Colonic mucosa (tissue), 4 donors: ENCODE measurements at regions of chr19 and their contacts with region 1.

Region 1: GRCh38 chr19:12564016-12564664 is 12.9 kb upstream of the ZNF564 start:
- DNase-seq: peak; percentile 95
- H3K4me3 ChIP-seq: no peak overlapping the region
- H3K27ac ChIP-seq: no peak overlapping the region
- H3K4me1 ChIP-seq: no peaks in the 10 kb centered on the region
- H3K27me3 ChIP-seq: no peaks in the 10 kb centered on the region
- CTCF ChIP-seq: peak; percentile 97

Region 2: GRCh38 chr19:12202250-12202649 is 361.9 kb before region 1 on chr19:
- intact Hi-C with region 1: loop called (anchors 5 kb)
- DNase-seq: peak; percentile 61
- H3K4me3 ChIP-seq: no peak overlapping the region
- H3K27ac ChIP-seq: no peak overlapping the region
- H3K4me1 ChIP-seq: no peaks in the 10 kb centered on the region
- H3K27me3 ChIP-seq: no peaks in the 10 kb centered on the region
- CTCF ChIP-seq: peak; percentile 32

Region 3: GRCh38 chr19:12484371-12485051 is 79.6 kb before region 1 on chr19 and contains the start of gene ZNF709:
- intact Hi-C with region 1: no loop called
- DNase-seq: peak; percentile 96
- H3K4me3 ChIP-seq: peak within 1 kb of the TSS; percentile 93
- H3K27ac ChIP-seq: peak within 1 kb of the TSS; percentile 56
- H3K4me1 ChIP-seq: no peaks in the 10 kb centered on the region
- H3K27me3 ChIP-seq: no peaks in the 10 kb centered on the region
- CTCF ChIP-seq: no peak
- total RNA-seq, gene ZNF709: 1.3 to 2.0 TPM

Region 4: GRCh38 chr19:12544401-12544876 is 19.7 kb before region 1 on chr19:
- intact Hi-C with region 1: no loop called
- DNase-seq: no peak
- H3K4me3 ChIP-seq: no peak overlapping the region
- H3K27ac ChIP-seq: no peak overlapping the region
- H3K4me1 ChIP-seq: peaks cover 3% of the 10 kb centered on the region
- H3K27me3 ChIP-seq: no peaks in the 10 kb centered on the region
- CTCF ChIP-seq: no peak

Region 5: GRCh38 chr19:12666265-12667048 is 102.3 kb after region 1 on chr19 and contains the starts of genes MAN2B1 and WDR83:
- intact Hi-C with region 1: loop called (anchors 5 kb)
- DNase-seq: peak; percentile 81
- H3K4me3 ChIP-seq: peak within 1 kb of the TSS; percentile 97
- H3K27ac ChIP-seq: peak within 1 kb of the TSS; percentile 71
- H3K4me1 ChIP-seq: peaks cover 16% of the 10 kb centered on the region
- H3K27me3 ChIP-seq: no peaks in the 10 kb centered on the region
- CTCF ChIP-seq: no peak
- total RNA-seq, gene MAN2B1: 51.7 to 67.4 TPM
- total RNA-seq, gene WDR83: 7.3 to 17.9 TPM